ENCODE measurements at regions of chr12 and their contacts with region 1.

Region 1: GRCh38 chr12:109804820-109805761 is 28.1 kb downstream of the TRPV4 start:
- DNase-seq: peak; percentile 84
- H3K4me3 ChIP-seq: no peak overlapping the region
- H3K27ac ChIP-seq: no peak overlapping the region
- H3K4me1 ChIP-seq: no peaks in the 10 kb centered on the region
- H3K27me3 ChIP-seq: no peaks in the 10 kb centered on the region
- CTCF ChIP-seq: peak; percentile 78 to 98 (median 86)
- EP300 ChIP-seq: no peak
- POLR2A ChIP-seq: no peak

Region 2: DNA sequence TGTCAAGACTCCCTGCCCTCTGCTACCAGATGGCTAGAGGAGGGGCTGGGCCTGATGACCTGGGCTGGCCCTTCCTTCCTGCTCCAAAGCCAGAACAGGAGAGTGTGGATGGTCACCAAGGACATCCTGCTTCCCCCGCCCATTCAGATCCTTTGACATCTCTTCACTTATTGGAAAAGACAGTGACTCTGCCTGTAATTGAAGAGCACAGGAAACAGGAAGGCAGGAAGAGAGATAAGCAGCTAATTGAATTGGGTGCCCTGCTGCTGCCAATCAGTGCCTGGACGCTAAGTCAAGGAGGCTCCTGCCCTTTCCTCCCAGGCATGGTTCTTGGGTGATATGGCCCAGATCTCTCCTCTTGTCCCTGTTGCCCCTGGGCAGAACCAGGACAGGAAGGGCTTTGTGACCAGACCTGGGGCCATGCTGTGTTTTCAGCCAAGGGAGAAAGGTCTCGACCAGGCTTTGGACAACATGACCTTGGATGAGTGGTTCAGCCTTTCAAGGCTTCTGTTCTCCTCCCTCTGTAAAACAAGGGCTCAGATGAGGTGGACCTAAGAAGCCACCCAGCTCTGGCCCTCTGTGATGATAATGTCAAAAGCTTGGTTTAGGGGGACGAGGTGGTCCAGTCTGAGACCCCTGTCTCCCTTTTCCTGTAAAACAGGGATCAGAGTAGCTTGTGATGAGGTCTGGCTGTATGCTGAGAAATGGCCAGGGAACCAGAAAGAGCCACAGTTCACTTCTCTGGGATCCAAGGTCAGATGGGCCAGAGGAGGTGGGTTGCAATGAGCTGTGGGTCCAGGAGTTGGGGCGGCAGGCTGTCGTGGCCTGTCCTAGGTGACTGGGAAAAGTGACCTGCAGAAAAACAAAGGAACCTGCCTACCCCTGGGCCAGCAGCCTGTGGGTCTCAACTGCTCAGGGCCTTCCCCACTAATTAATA is 52.7 kb before region 1 on chr12:
- intact Hi-C with region 1: no loop called
- DNase-seq: peak; percentile 22
- H3K4me3 ChIP-seq: no peak overlapping the region
- H3K27ac ChIP-seq: no peak overlapping the region
- H3K4me1 ChIP-seq: no peaks in the 10 kb centered on the region
- H3K27me3 ChIP-seq: no peaks in the 10 kb centered on the region
- CTCF ChIP-seq: no peak
- EP300 ChIP-seq: no peak
- POLR2A ChIP-seq: no peak

Region 3: GRCh38 chr12:109844983-109845823 is 40.1 kb after region 1 on chr12:
- intact Hi-C with region 1: loop called (anchors 1 kb)
- DNase-seq: peak; percentile 90
- H3K4me3 ChIP-seq: peak overlapping the region in 2 of 4 donors; percentile 18 to 35
- H3K27ac ChIP-seq: no peak overlapping the region
- H3K4me1 ChIP-seq: peaks cover 0 to 9% (median 4%) of the 10 kb centered on the region in 4 donors
- H3K27me3 ChIP-seq: no peaks in the 10 kb centered on the region
- CTCF ChIP-seq: peak; percentile 79 to 99 (median 90)
- EP300 ChIP-seq: no peak
- POLR2A ChIP-seq: no peak